ENCODE measurements at regions of chr18 and their contacts with region 1.

Region 1: GRCh38 chr18:32086861-32087260 is 4.8 kb upstream of the RNF138 start:
- DNase-seq: no peak
- ATAC-seq: no peak

Region 2: DNA sequence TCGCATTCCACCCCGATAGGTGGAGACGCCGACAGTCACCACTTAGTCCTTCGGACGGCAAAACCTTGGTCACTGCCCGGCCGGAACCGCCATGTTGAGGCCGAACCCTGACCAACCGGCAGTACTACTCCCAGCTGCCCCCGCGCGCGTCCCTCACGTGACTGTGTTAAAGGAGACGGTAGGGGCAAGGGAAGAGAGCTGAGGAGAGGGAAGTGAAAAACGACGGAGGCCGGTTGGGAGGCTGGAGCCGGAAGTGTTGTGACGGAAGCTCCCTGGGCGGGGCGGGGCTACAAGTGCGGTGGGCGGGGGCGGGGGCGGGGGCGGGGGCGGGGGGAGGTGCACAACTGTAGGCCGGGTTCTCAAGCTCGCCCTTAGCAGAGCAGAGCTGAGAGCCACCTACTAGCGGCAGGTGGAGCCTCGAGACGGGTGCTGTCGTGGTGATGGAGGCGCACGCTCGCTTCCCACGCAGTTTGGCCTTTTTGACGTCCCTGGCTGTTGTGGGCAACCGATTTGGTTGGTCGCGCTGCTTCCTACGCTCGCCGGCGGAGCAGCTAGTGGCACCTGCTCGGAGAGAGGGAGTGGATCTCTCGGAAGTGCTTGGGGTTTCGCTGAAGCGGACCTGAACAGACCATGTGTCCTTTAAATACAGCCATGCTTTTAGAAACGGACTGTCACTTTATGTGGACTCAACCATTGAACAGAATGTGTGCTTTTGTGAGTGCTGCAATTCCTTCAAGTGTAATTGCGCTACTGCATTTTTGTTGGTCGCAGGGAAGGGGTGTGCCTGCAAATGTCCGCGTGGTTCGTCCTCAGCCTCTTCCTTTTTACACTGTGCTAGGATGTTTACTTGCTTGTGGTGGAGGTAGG is 143.6 kb before region 1 on chr18 and contains the start of gene TRAPPC8:
- intact Hi-C with region 1: loop called (anchors 10 kb)
- DNase-seq: peak; percentile 99
- ATAC-seq: peak; percentile 98
- total RNA-seq, gene TRAPPC8: 34.1 TPM

Region 3: DNA sequence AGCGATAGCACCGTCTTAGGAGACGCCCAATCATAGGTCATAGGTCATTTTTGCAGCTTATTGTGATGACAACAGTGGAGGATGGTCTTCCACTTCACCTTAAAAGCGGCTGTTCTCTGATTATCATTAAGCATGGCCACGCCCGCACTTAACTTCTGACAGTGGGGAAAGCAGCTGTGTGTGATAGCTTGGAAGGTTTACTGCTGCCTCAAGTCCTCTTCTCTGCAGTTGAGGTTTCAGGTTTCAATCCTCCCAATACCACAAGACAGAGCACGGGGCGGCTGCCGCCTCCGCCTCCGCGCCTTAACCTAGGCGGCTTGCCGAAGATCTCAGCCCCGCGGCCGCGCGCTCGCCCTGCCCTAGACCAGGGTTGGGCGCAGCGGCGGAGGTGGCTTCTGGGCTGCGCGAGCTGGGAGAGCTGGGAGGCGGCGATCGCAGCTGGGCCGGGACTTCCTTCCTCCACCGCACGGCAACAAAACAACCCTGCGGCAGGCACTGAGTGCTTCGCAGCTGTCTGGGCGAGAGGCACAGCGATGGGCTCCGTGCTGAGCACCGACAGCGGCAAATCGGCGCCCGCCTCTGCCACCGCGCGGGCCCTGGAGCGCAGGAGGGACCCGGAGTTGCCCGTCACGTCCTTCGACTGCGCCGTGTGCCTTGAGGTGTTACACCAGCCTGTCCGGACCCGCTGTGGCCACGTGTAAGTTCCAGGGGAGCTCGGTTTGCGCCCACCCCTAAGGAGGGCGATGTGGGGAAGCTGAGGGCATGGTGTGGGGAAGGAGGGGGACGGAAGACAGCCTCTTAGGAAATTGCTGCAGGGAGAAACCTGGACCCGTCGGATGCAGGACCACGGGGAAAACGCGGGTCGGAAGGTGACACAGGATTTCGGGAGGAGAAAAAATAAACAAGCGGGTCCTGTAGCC is 68.3 kb before region 1 on chr18 and contains the start of gene RNF125:
- intact Hi-C with region 1: loop called (anchors 10 kb)
- DNase-seq: peak; percentile 91
- ATAC-seq: peak; percentile 96
- total RNA-seq, gene RNF125: 3.8 TPM